Activated naive CD4-positive, alpha-beta T cell treated with anti-CD3 and anti-CD28 coated beads for 36 hours (primary cell): ENCODE measurements at regions of chr19 and their contacts with region 1.

Region 1: DNA sequence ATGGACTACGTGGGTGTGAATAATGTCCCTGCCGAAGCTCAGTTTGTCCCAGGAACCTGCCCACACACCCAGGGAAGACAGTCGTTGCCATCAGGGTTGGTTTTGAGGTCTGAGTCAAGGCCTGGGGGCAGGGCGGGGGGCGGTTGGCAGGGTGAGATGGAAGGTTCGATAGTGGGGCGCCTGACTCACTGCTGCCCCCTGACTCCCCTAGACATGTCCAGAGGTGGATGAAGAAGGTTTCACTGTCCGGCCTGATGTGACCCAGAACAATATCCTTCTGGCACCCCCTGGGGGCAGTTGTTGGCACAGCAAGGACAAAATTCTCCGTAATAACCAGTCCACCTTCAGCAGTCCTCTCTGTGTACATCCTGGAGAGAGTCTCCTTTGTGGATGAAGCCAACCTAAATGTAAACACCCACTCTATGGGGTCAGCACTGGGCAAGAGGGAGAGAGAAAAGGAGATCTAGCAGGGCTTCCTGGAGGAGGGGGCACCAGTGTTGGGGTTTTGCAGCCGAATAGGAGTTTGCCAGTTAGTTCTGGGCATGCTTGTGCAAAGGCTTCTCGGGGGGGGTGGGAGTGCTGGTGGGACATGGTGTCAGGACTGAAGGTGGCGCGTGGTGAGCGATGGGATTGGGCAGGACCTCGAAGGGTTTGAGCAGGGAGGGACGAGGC is 19.6 kb upstream of the B3GNT3 start:
- DNase-seq: peak; percentile 51
- H3K4me3 Mint-ChIP-seq: no peak overlapping the region
- H3K27ac Mint-ChIP-seq: peak overlapping the region; percentile 69
- H3K4me1 Mint-ChIP-seq: peaks cover 10% of the 10 kb centered on the region
- H3K27me3 Mint-ChIP-seq: no peaks in the 10 kb centered on the region

Region 2: DNA sequence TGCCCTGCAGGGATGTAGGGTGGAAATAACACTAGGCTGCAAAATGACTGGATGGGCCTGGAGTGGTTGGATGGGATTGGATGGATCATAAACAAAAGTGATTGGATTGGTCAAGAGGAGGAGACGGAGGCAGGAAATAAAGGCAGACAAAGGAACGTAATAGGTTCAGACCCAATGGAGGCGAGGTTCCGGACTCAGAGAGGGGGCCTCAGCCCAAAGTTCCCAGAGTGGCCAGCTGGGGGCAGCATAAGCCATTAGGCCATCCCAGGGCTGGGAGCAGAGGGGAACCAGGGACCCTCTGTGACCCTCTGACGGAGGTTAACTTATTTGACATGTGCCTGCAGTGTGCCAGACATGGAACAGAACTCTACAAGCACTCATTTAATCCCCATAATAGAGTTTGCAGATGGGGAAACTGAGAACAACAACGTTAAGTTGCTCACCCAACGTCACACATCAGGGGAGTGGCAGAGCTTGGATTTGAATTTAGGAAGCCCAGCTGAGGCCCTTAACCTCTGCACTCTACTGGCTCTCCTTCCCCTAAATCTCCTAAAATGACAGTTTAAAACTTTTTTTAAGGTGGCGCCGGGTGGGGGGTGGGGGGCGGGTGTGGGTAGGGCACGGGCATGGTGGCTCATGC is 71.4 kb before region 1 on chr19:
- CTCF ChIA-PET with region 1: interaction called, 12 read pairs
- intact Hi-C with region 1: loop called (anchors 2 kb)
- DNase-seq: peak; percentile 82
- H3K4me3 Mint-ChIP-seq: no peak overlapping the region
- H3K27ac Mint-ChIP-seq: no peak overlapping the region
- H3K4me1 Mint-ChIP-seq: no peaks in the 10 kb centered on the region
- H3K27me3 Mint-ChIP-seq: peaks cover 2% of the 10 kb centered on the region

Region 3: DNA sequence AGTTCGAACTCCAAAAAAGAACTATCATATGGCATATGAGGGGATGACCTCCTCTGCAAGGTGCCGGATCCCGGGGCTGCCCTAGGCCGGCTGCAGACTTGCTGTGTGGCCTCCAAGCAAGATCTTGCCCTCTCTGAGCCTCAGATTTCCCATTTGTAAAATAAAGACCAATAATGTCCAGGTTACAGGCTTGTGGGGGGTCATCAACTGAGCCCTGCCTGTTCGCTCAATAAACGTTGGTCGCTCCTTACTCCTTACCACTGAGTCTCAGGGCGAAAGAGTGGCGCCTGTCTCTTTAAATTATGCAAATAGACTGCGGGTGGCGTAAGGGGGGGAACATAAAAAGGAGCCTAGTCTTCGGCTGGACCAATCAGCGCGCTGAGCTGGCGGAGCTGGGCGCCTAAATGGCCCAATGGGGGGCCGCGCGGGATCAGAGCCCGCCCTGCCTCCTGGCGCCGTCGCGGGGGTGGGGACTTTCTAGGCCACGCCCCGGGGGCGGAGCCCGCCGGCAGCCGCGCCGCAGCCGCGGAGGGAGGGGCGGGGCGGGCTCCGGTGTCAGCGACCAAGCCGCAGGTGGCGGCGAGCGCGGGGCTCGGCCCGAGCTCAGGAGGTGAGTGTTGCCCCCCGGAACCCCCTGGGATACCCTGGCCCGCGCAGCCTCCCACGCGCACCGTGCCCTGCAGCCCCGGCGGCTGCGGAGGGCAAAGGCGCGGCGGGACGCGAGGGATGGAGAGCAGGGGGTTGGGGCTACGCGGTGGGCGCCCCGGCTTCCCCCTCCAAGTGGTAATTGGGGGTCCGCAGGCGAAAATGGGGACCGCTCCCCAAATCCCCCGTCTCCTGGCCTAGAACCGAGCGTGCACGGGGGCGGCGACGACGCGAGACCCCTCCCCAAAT is 27.9 kb before region 1 on chr19:
- CTCF ChIA-PET with region 1: interaction called, 5 read pairs
- intact Hi-C with region 1: loop called (anchors 2 kb)
- DNase-seq: peak; percentile 97
- H3K4me3 Mint-ChIP-seq: peak overlapping the region; percentile 63
- H3K27ac Mint-ChIP-seq: peak overlapping the region; percentile 56
- H3K4me1 Mint-ChIP-seq: peaks cover 40% of the 10 kb centered on the region
- H3K27me3 Mint-ChIP-seq: no peaks in the 10 kb centered on the region